ENCODE measurements at regions of chr1 and their contacts with region 1.

Region 1: GRCh38 chr1:234309598-234310459 is 63.4 kb upstream of the COA6 start:
- DNase-seq: peak; percentile 81
- H3K4me3 Mint-ChIP-seq: peak overlapping the region; percentile 66
- H3K27ac Mint-ChIP-seq: no peak overlapping the region
- H3K4me1 Mint-ChIP-seq: peaks cover 14% of the 10 kb centered on the region
- H3K27me3 Mint-ChIP-seq: peaks cover 38% of the 10 kb centered on the region
- CTCF ChIP-seq: peak; percentile 87

Region 2: GRCh38 chr1:234114648-234115307 is 195.1 kb before region 1 on chr1:
- CTCF ChIA-PET with region 1: interaction called, 14 read pairs
- intact Hi-C with region 1: loop called (anchors 1 kb)
- DNase-seq: peak; percentile 28
- H3K4me3 Mint-ChIP-seq: peak overlapping the region; percentile 40
- H3K27ac Mint-ChIP-seq: no peak overlapping the region
- H3K4me1 Mint-ChIP-seq: peaks cover 9% of the 10 kb centered on the region
- H3K27me3 Mint-ChIP-seq: peaks cover 7% of the 10 kb centered on the region
- CTCF ChIP-seq: peak; percentile 57

Region 3: DNA sequence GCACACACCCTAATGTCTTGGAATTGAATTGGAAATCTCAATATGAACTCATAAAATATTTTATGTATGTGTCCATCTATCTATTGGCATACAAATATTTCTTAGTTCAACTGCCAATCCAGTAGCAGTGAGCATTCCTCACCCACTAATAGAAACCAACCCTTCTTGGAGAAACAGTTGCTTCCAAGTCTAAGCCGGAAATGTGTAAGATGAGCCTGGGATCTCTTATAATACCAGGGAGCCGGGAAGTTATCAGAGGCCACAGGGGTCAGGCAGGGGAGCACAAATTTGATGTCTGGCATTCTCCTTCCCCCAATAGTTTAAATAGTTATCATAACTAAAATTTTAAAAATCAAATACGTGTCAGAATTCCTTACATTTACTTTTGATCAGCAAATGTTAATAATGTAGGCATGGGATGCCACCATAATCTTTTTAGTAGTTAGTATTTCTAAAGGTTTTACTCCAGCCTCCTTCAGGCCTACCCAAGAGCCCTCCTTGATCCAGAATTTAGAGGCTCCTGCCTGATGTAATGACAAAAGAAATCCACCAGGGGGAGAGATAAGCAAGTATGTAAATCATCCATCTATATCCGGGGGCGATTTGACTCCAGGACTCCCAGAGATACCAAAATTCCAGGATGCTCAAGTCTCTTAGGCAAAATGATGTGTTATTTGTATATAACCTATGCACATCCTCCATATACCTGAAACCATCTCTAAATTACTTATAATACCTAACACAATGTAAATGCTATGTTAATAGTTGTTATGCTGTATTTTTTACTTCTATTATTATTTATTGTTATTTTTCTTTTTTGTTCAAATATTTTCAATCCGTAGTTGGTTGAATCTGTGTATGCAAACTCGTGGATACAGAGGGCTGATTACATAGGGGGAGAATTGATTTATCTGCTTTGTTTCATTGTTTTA is 155.2 kb before region 1 on chr1:
- CTCF ChIA-PET with region 1: interaction called, 5 read pairs
- intact Hi-C with region 1: loop called (anchors 1 kb)
- DNase-seq: peak; percentile 47
- H3K4me3 Mint-ChIP-seq: no peak overlapping the region
- H3K27ac Mint-ChIP-seq: no peak overlapping the region
- H3K4me1 Mint-ChIP-seq: no peaks in the 10 kb centered on the region
- H3K27me3 Mint-ChIP-seq: no peaks in the 10 kb centered on the region
- CTCF ChIP-seq: peak; percentile 84

Region 4: GRCh38 chr1:234212764-234213657 is 96.8 kb before region 1 on chr1:
- CTCF ChIA-PET with region 1: interaction called, 14 read pairs
- intact Hi-C with region 1: loop called (anchors 2 kb)
- DNase-seq: peak; percentile 33
- H3K4me3 Mint-ChIP-seq: peak overlapping the region; percentile 71
- H3K27ac Mint-ChIP-seq: no peak overlapping the region
- H3K4me1 Mint-ChIP-seq: no peaks in the 10 kb centered on the region
- H3K27me3 Mint-ChIP-seq: peaks cover 69% of the 10 kb centered on the region
- CTCF ChIP-seq: no peak

Region 5: DNA sequence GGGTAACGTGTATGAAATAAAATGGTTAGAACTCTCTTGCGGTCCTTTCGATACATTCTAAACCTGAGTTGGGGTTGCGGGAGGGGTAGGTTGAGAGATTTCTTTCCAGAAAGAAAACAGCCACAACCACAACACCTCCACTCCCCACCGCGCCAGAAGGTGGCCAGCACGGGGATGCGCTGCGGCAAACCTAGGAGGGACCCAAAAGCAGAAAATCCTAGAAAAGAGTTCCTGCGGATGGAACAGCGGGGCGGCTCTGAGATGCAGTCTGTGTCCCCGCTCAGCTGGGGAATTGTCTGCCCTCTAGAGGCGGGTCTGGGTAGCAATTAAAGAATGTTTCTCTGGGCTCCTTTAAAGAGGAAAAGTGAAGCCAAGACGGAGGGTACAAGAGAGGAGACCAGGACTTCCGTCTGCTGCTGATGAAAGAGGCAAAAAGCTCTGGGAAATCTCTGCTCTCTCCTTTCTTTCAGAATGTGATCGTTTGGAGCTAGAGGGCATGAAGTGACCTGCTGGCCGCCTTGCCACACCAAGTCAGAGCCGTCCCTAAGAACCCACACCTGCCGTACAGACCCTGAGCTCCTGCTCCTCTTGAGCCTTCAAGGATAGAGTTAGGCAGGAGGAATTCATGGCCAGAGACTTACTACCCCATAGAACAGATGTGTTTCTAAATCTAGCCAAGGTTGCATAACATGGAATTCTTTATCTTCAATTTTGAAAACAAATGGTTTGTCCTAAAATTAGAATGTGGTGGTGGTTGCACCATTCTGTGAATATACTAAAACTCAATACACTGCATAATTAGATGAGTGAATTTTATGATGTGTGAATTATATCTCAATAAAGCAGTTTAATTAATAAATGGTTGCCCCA is 16.9 kb after region 1 on chr1:
- CTCF ChIA-PET with region 1: interaction called, 12 read pairs
- intact Hi-C with region 1: no loop called
- DNase-seq: peak; percentile 79
- H3K4me3 Mint-ChIP-seq: peak overlapping the region; percentile 2
- H3K27ac Mint-ChIP-seq: no peak overlapping the region
- H3K4me1 Mint-ChIP-seq: no peaks in the 10 kb centered on the region
- H3K27me3 Mint-ChIP-seq: peaks cover 59% of the 10 kb centered on the region
- CTCF ChIP-seq: peak; percentile 86